Endothelial cell of umbilical vein (primary cell): ENCODE measurements at regions of chr5 and their contacts with region 1.

Region 1: GRCh38 chr5:172059661-172060100 is 53.2 kb upstream of the FBXW11 start:
- DNase-seq: peak; percentile 35
- H3K4me3 ChIP-seq: no peak overlapping the region
- H3K27ac ChIP-seq: no peak overlapping the region
- H3K4me1 ChIP-seq: no peaks in the 10 kb centered on the region
- H3K27me3 ChIP-seq: no peaks in the 10 kb centered on the region
- CTCF ChIP-seq: peak; percentile 50 to 61
- POLR2A ChIP-seq: no peak

Region 2: GRCh38 chr5:171907725-171908343 is 151.8 kb before region 1 on chr5:
- CTCF ChIA-PET with region 1: interaction called, 292 read pairs
- POLR2A ChIA-PET with region 1: interaction called, 9 read pairs
- dilution Hi-C with region 1: no loop called
- intact Hi-C with region 1: loop called (anchors 1 kb)
- DNase-seq: peak; percentile 65
- H3K4me3 ChIP-seq: no peak overlapping the region
- H3K27ac ChIP-seq: no peak overlapping the region
- H3K4me1 ChIP-seq: no peaks in the 10 kb centered on the region
- H3K27me3 ChIP-seq: no peaks in the 10 kb centered on the region
- CTCF ChIP-seq: peak; percentile 52 to 58
- POLR2A ChIP-seq: no peak

Region 3: GRCh38 chr5:172006321-172007174 is 53.1 kb before region 1 on chr5 and contains the start of gene FBXW11:
- CTCF ChIA-PET with region 1: interaction called, 36 read pairs
- POLR2A ChIA-PET with region 1: no interaction called
- dilution Hi-C with region 1: no loop called
- intact Hi-C with region 1: no loop called
- DNase-seq: peak; percentile 95
- H3K4me3 ChIP-seq: peak within 1 kb of the TSS; percentile 66 to 98 (median 88)
- H3K27ac ChIP-seq: peak within 1 kb of the TSS; percentile 78
- H3K4me1 ChIP-seq: peaks cover 44% of the 10 kb centered on the region
- H3K27me3 ChIP-seq: no peaks in the 10 kb centered on the region
- CTCF ChIP-seq: no peak
- POLR2A ChIP-seq: peak; percentile 96
- total RNA-seq, gene FBXW11: 42.3 and 44.7 TPM in 2 replicates

Region 4: DNA sequence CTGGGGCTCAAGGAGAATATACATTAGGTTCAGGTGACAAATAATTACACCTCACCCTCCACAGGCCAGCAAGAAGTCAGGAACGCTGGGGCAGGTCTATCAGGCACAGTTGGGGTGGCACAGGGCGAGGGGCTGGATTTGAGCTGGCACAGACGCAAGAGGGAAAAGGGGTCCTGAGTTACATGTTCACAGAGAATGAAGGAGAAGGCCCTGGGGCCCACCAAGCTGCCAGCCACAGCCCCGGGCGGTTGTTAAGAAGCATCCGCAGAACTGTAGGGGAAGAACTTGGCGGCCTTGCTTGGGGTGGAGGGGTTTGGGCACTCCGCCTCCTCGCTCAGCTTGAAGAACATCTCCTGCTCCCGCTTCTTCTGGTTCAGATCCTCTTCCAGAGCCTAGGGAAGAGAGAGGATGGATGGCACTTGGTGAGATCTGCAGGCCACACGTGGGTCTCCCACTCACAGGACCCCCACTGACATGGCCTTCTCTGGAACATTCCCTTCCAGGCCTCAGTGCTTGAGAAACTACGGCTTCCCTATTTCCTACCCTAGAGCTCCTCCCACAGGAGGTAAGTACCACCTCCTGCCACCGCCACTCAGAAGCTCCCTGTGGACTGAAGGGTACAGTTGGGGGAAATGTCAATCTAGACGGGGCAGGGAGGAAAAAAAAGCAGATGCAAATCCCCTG is 14.9 kb before region 1 on chr5:
- CTCF ChIA-PET with region 1: interaction called, 26 read pairs
- POLR2A ChIA-PET with region 1: no interaction called
- dilution Hi-C with region 1: no loop called
- intact Hi-C with region 1: no loop called
- DNase-seq: no peak
- H3K4me3 ChIP-seq: no peak overlapping the region
- H3K27ac ChIP-seq: no peak overlapping the region
- H3K4me1 ChIP-seq: peaks cover 19% of the 10 kb centered on the region
- H3K27me3 ChIP-seq: no peaks in the 10 kb centered on the region
- CTCF ChIP-seq: no peak
- POLR2A ChIP-seq: no peak

Region 5: GRCh38 chr5:172106511-172107356 is 47.1 kb after region 1 on chr5:
- CTCF ChIA-PET with region 1: interaction called, 4 read pairs
- POLR2A ChIA-PET with region 1: no interaction called
- dilution Hi-C with region 1: no loop called
- intact Hi-C with region 1: loop called (anchors 5 kb)
- DNase-seq: peak; percentile 46
- H3K4me3 ChIP-seq: no peak overlapping the region
- H3K27ac ChIP-seq: no peak overlapping the region
- H3K4me1 ChIP-seq: peaks cover 34% of the 10 kb centered on the region
- H3K27me3 ChIP-seq: no peaks in the 10 kb centered on the region
- CTCF ChIP-seq: peak; percentile 78 to 97
- POLR2A ChIP-seq: no peak

Region 6: DNA sequence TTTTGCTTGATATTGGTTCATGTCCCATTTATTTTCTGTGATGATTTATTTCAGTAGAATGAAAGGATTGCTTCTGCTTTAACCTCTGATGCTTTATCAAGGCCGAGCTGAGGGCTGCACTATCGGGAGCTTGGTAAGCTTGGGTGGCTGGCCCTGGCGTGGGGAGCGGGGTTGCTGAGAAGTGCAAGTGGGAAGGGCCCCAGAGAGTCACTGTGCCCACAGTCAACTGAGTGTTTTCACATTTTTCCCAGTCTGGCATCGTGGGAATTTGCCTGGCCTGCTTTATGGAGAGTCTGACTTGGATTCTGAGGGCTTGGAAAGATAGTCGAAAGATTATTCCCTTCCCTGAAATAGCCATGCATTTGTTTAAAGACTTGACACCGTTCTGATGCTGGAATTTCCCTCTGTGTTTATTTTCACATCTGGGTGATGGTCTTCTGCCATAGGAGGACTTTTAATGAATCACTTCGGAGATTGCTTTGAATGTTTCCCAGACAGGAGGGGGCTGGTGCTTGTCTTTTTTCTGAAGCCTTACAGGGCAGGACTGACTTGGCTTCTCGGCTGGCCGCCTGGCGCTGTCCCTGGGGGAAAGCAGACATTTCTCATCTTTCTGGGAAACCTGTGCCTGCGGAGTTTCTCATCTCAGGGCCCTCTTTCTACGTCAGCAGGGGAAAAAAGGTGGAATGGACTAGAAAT is 1417.8 kb after region 1 on chr5:
- CTCF ChIA-PET with region 1: no interaction called
- POLR2A ChIA-PET with region 1: no interaction called
- dilution Hi-C with region 1: no loop called
- intact Hi-C with region 1: no loop called
- DNase-seq: no peak
- H3K4me3 ChIP-seq: no peak overlapping the region
- H3K27ac ChIP-seq: no peak overlapping the region
- H3K4me1 ChIP-seq: peaks cover 3% of the 10 kb centered on the region
- H3K27me3 ChIP-seq: no peaks in the 10 kb centered on the region
- CTCF ChIP-seq: no peak
- POLR2A ChIP-seq: no peak